ENCODE measurements at regions of chr3 and their contacts with region 1.

Region 1: GRCh38 chr3:76024640-76025039 is 239.3 kb upstream of the ZNF717 start:
- DNase-seq: peak; percentile 29
- H3K4me3 ChIP-seq: no peak overlapping the region
- H3K27ac ChIP-seq: no peak overlapping the region
- H3K4me1 ChIP-seq: no peaks in the 10 kb centered on the region
- H3K27me3 ChIP-seq: no peaks in the 10 kb centered on the region
- CTCF ChIP-seq: peak; percentile 33 to 64

Region 2: GRCh38 chr3:75967071-75967470 is 57.6 kb before region 1 on chr3:
- CTCF ChIA-PET with region 1: no interaction called
- dilution Hi-C with region 1: no loop called
- in situ Hi-C with region 1: no loop called
- intact Hi-C with region 1: no loop called
- DNase-seq: no peak
- H3K4me3 ChIP-seq: no peak overlapping the region
- H3K27ac ChIP-seq: no peak overlapping the region
- H3K4me1 ChIP-seq: no peaks in the 10 kb centered on the region
- H3K27me3 ChIP-seq: no peaks in the 10 kb centered on the region
- CTCF ChIP-seq: no peak

Region 3: DNA sequence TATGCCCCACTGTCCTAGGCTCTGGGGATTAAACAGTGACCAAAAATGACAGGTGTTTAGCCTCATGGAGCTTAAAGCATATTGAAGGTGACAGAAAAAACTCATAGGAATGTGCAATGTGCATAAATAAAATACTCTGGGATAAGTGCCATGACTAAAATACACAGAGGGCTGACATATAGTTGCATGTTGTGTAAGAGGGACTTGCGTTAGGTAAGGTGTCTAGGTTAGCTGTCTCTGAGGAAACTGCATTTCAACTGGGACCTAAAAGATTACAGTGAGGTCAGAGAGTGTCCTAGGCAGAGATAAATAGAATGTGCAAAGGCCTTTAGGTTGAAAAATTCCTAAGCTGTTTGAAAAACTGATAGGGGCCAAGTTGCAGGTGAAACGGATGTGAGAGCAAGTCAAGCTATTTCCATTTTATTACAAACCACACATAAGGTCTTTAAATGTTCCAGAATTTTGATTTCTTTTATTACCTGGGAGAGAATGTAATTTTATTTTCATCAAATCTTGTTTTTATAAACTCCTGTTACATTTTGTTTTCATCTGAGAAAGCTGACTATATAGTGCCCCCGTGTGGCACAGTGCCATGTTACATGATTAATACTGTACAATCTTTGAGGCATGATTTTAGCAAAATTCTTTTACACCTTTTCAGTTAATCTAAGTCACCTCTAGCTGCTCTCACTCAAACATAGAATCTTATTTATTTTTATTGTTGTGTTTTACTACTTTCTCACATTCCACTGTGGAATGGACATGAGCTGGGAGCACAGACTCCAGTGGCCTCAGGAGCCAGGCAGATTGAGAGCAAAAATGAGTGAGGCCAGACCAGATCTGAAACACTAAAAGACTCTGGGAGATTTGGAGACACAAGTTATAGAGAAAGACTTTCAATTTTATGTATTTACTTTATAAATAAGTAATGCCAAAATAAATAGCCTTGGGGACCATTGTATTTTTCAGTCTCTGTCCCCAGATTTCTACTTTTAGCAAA is 20.3 kb after region 1 on chr3:
- CTCF ChIA-PET with region 1: no interaction called
- dilution Hi-C with region 1: no loop called
- in situ Hi-C with region 1: no loop called
- intact Hi-C with region 1: loop called (anchors 2 kb)
- DNase-seq: no peak
- H3K4me3 ChIP-seq: no peak overlapping the region
- H3K27ac ChIP-seq: no peak overlapping the region
- H3K4me1 ChIP-seq: no peaks in the 10 kb centered on the region
- H3K27me3 ChIP-seq: no peaks in the 10 kb centered on the region
- CTCF ChIP-seq: peak; percentile 57 to 67

Region 4: GRCh38 chr3:76570436-76571057 is 545.9 kb after region 1 on chr3:
- CTCF ChIA-PET with region 1: interaction called, 4 read pairs
- dilution Hi-C with region 1: no loop called
- in situ Hi-C with region 1: loop called in 1 of 2 experiments (anchors 25 kb)
- intact Hi-C with region 1: loop called (anchors 5 kb)
- DNase-seq: no peak
- H3K4me3 ChIP-seq: no peak overlapping the region
- H3K27ac ChIP-seq: no peak overlapping the region
- H3K4me1 ChIP-seq: no peaks in the 10 kb centered on the region
- H3K27me3 ChIP-seq: no peaks in the 10 kb centered on the region
- CTCF ChIP-seq: peak; percentile 60 to 62